HEK293T (cell line): ENCODE measurements at regions of chr16 and their contacts with region 1.

Region 1: GRCh38 chr16:69057400-69058378 is 47.8 kb upstream of the HAS3 start:
- DNase-seq: no peak

Region 2: GRCh38 chr16:68993885-68994284 is 63.8 kb before region 1 on chr16:
- CTCF ChIA-PET with region 1: interaction called, 10 read pairs
- POLR2A ChIA-PET with region 1: no interaction called
- DNase-seq: no peak